Calu3 (cell line): ENCODE measurements at regions of chr19 and their contacts with region 1.

Region 1: DNA sequence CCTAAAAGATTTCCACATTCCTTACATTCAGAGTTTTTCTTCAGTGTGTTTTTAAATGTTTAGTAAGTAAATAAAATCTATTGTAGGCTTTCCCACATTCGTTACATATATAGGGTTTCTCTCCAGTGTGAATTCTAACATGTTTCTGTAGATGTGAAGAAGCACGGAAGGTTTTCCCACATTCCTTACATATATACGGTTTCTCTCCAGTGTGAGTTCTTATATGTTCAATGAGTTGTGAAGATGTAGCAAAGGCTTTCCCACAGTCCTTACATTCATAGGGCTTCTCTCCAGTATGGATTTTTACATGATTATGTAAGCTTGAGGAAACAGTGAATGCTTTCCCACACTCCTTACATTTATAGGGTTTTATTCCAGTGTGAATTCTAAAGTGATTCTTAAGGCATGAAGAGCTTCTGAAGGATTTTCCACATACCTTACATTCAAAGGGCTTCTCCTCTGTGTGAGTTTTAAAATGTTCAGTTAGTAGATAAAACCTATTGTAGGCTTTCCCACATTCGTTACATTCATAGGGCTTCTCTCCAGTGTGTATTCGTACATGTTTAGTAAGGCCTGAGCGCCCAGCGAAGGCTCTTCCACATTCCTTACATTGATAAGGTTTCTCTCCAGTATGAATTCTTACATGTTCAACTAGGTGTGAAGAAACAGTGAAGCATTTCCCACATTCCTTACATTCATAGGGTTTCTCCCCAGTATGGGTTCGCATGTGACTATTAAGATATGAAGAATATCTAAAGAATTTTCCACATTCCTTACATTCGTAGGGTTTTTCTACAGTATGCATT is 18.2 kb downstream of the ZNF121 start:
- DNase-seq: no peak
- H3K4me3 Mint-ChIP-seq: no peak overlapping the region
- H3K27ac Mint-ChIP-seq: peak overlapping the region; percentile 30
- H3K4me1 Mint-ChIP-seq: no peaks in the 10 kb centered on the region
- H3K27me3 Mint-ChIP-seq: no peaks in the 10 kb centered on the region
- CTCF ChIP-seq: no peak

Region 2: DNA sequence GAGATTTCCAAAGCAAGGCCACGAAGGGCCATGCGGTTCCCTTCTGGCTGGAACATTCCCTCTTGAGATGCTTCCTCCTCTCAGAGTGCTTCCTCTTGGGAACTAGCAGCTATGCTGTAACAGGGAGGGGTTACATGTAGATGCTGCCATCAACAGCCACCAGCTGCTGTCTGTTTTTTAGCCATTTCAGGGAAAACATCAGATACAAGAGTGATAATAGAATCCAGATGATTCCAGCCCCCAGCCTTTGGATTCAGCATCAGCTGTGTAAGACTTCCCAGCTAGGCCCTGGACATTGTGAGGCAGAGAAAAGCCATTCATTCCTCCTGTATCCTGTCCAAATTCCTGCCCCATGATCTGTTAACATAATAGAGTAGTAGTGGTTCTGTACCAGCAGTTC is 211.5 kb before region 1 on chr19:
- CTCF ChIA-PET with region 1: interaction called, 13 read pairs
- intact Hi-C with region 1: no loop called
- DNase-seq: no peak
- H3K4me3 Mint-ChIP-seq: no peak overlapping the region
- H3K27ac Mint-ChIP-seq: no peak overlapping the region
- H3K4me1 Mint-ChIP-seq: no peaks in the 10 kb centered on the region
- H3K27me3 Mint-ChIP-seq: no peaks in the 10 kb centered on the region
- CTCF ChIP-seq: no peak